HCT116 (cell line): ENCODE measurements at regions of chr17 and their contacts with region 1.

Region 1: DNA sequence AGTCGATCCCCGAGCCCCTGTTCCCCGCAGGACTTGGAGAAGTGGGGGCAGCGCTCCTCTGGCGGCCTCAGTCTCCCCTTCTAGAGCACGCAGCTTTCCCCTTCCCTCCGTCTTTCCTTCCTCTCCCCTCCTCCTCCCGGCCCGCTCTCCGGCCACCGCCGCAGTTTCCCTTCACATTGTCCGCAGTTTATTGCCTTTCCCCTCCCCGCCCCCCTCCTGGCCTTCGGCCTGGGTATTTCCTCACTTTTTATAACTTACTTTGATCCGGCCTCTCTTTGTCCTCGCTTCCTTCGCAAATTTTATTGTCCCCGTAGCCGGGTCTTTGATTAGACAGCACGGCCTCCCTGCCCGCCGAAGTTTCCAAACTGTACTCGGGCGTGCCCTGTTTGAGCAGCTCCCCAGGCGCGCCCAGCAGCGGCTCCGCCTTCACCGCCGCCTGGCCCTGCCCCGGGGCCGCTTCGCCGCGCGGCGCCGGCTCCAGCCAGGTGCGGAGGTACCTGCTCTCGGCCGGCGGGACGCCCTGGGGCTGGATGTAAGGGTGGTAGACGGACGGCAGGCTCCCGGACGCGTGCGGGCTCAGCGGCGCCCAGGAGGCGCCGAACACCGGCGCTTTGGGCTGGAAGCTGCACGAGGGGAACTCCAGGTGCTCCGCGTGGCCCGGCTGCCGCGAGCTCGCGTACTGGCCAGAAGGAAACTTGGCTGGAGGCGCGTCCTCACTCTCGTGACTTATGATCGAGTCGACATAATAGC is 488 bp downstream of the HOXB9 start:
- DNase-seq: no peak
- ATAC-seq: peak; percentile 76
- H3K4me3 ChIP-seq: peak overlapping the region; percentile 81 to 86
- H3K27ac ChIP-seq: peak overlapping the region; percentile 95
- H3K4me1 ChIP-seq: peaks cover 15 to 30% of the 10 kb centered on the region in 2 experiments
- H3K27me3 ChIP-seq: no peaks in the 10 kb centered on the region
- CTCF ChIP-seq: no peak
- POLR2A ChIP-seq: peak; percentile 51
- RAD21 ChIP-seq: no peak

Region 2: DNA sequence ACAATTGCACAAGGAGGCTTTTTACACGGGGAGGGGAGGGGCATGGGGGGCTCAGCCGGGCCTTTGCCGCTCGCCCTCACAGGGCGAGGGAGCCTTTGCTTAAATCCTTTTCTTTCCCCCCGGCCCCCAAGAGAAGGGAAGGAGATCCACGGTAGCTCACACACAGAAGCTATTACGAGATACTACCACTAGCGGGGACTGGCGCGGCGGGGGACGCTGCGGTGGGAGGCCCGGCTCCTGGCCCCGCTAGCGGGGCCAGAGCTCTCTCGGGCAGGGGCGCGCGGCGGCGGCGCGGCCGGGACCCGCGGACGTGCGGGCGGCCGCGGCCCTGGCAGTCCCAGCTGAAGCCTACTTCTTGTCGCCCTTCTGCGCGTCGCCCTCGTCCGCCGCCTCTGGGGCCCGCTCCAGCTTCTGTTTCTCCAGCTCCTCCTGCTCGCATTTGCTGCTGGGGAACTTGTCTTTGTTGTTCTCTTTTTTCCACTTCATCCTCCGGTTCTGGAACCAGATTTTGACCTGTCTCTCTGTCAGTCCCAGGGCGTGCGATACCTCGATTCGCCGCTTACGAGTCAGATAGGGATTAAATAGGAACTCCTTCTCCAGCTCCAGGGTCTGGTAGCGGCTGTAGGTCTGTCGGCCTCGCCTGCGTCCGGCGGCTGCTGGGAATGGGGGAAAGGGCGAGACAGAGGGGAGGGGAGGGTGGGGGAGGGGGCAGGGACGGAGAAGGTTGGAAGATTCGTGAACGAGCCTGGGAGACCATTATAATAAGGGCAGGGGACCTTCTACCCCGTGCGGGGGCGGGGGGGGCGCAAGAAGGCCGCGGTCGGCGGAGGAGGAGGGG is 12.6 kb before region 1 on chr17:
- CTCF ChIA-PET with region 1: interaction called, 6 read pairs
- POLR2A ChIA-PET with region 1: interaction called, 11 read pairs
- RAD21 ChIA-PET with region 1: no interaction called
- intact Hi-C with region 1: no loop called
- DNase-seq: no peak
- ATAC-seq: peak; percentile 19
- H3K4me3 ChIP-seq: peak overlapping the region; percentile 80 to 90
- H3K27ac ChIP-seq: peak overlapping the region; percentile 98
- H3K4me1 ChIP-seq: peaks cover 19 to 58% of the 10 kb centered on the region in 2 experiments; a peak in 3 of 4 replicates
- H3K27me3 ChIP-seq: no peaks in the 10 kb centered on the region
- CTCF ChIP-seq: peak in 1 of 3 experiments; percentile 14; a peak in 2 of 6 replicates
- POLR2A ChIP-seq: no peak
- RAD21 ChIP-seq: no peak

Region 3: DNA sequence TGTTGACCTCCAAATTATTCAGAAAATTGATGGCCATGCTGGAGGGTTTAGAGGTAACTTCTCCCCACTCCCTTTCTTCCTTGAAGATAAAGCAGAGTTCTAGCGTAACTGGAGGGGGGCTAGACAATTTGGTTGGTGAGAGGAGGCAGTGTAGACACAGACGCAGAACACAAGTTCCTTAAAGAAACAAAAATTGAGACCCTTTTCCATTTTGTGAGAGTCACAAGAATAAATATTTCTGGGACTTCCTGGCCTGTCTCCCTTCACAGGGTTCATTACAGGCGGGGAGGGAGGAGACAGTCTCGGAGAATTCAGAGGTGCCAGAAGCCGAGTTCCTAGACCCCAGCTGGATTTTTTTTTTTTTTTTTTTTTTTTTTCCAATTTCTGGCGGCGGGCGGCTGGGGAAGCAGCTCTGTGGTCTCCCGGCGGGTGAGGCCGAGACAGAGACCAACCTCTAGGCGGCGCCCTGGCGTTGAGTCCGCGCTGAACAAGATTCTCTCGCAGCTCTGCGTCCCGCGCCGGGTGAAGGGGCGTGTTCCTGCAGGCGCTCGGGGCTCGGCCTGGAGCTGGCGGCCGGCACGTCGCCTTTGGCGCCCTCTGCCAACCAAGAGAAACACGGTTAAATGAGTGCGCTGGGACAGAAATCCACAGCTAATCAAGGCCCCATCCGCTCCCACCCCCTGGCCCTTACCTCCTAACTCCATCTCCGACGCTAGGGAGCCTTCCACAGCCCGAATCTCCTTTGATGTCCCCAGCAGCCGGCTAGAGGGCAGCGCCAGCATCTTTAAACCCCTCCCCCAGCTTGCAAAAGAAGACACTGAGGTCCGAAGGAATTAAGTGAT is 10.7 kb after region 1 on chr17:
- CTCF ChIA-PET with region 1: interaction called, 12 read pairs
- POLR2A ChIA-PET with region 1: interaction called, 8 read pairs
- RAD21 ChIA-PET with region 1: interaction called in 1 of 2 experiments, 4 read pairs
- intact Hi-C with region 1: no loop called
- DNase-seq: no peak
- ATAC-seq: peak; percentile 62
- H3K4me3 ChIP-seq: no peak overlapping the region
- H3K27ac ChIP-seq: no peak overlapping the region
- H3K4me1 ChIP-seq: peaks cover 8 to 19% of the 10 kb centered on the region in 2 experiments; a peak in 3 of 4 replicates
- H3K27me3 ChIP-seq: no peaks in the 10 kb centered on the region
- CTCF ChIP-seq: peak; percentile 8 to 60 (median 52); a peak in 4 of 6 replicates
- POLR2A ChIP-seq: no peak
- RAD21 ChIP-seq: no peak

Region 4: GRCh38 chr17:48728232-48729231 is 102.9 kb after region 1 on chr17 and contains the start of gene HOXB13:
- CTCF ChIA-PET with region 1: no interaction called
- POLR2A ChIA-PET with region 1: no interaction called
- RAD21 ChIA-PET with region 1: no interaction called
- intact Hi-C with region 1: no loop called
- DNase-seq: peak; percentile 75
- ATAC-seq: peak; percentile 91
- H3K4me3 ChIP-seq: peak within 1 kb of the TSS; percentile 61 to 80
- H3K27ac ChIP-seq: peak within 1 kb of the TSS; percentile 28
- H3K4me1 ChIP-seq: peaks cover 5 to 21% of the 10 kb centered on the region in 2 experiments; a peak in 3 of 4 replicates
- H3K27me3 ChIP-seq: no peaks in the 10 kb centered on the region
- CTCF ChIP-seq: no peak
- POLR2A ChIP-seq: peak; percentile 58
- RAD21 ChIP-seq: no peak
- total RNA-seq, gene HOXB13: 7.8 TPM